MCF 10A (cell line): ENCODE measurements at regions of chr7 and their contacts with region 1.

Region 1: GRCh38 chr7:15720849-15721471 is 34.5 kb upstream of the MEOX2 start:
- DNase-seq: peak; percentile 53
- H3K4me3 Mint-ChIP-seq: no peak overlapping the region
- H3K27ac Mint-ChIP-seq: no peak overlapping the region
- H3K4me1 Mint-ChIP-seq: no peaks in the 10 kb centered on the region
- H3K27me3 Mint-ChIP-seq: peaks cover 70% of the 10 kb centered on the region
- CTCF ChIP-seq: peak; percentile 70

Region 2: DNA sequence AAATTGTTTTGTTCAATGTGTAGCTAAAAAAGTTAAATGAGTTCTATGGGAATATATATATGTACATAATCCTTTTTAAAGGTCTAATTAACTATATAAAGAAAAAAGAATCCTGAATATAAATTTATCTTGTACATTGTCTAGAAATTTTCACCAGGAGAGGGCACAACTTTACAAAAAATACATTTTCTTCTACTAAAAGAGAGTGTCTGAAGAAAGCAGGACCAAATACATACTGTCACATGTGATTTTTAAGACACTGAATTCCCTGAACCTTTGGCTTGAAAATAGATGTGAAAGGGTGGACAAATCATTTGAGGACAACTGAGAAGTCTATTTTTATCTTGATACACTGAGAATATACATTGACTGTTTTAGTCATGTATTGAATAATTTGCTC is 1022.7 kb before region 1 on chr7:
- CTCF ChIA-PET with region 1: no interaction called
- POLR2A ChIA-PET with region 1: no interaction called
- intact Hi-C with region 1: loop called (anchors 2 kb)
- DNase-seq: no peak
- H3K4me3 Mint-ChIP-seq: no peak overlapping the region
- H3K27ac Mint-ChIP-seq: no peak overlapping the region
- H3K4me1 Mint-ChIP-seq: no peaks in the 10 kb centered on the region
- H3K27me3 Mint-ChIP-seq: peaks cover 47% of the 10 kb centered on the region
- CTCF ChIP-seq: peak; percentile 13

Region 3: DNA sequence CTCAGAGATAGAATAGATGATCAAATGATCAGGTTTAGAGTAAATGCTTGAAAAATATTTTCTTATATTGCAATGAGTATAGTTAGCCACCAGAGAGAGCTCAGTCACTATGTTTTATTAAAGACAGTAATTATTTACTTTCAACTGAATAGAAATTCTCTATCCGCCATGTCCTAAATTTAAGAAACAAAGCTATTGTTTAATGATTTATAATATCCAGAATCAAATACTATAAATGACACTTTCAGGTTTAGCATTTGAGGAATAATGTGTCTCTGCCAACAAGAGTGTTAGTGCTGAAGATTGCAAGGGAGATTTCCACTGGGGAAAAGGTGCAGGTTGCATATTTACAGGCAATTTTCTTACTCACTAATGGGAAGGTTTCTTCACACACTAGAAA is 1003.1 kb before region 1 on chr7:
- CTCF ChIA-PET with region 1: interaction called, 4 read pairs
- POLR2A ChIA-PET with region 1: no interaction called
- intact Hi-C with region 1: loop called (anchors 2 kb)
- DNase-seq: peak; percentile 17
- H3K4me3 Mint-ChIP-seq: no peak overlapping the region
- H3K27ac Mint-ChIP-seq: no peak overlapping the region
- H3K4me1 Mint-ChIP-seq: no peaks in the 10 kb centered on the region
- H3K27me3 Mint-ChIP-seq: peaks cover 63% of the 10 kb centered on the region
- CTCF ChIP-seq: peak; percentile 59

Region 4: GRCh38 chr7:15305002-15305600 is 415.9 kb before region 1 on chr7:
- CTCF ChIA-PET with region 1: interaction called, 12 read pairs
- POLR2A ChIA-PET with region 1: no interaction called
- intact Hi-C with region 1: loop called (anchors 1 kb)
- DNase-seq: peak; percentile 71
- H3K4me3 Mint-ChIP-seq: no peak overlapping the region
- H3K27ac Mint-ChIP-seq: no peak overlapping the region
- H3K4me1 Mint-ChIP-seq: no peaks in the 10 kb centered on the region
- H3K27me3 Mint-ChIP-seq: peaks cover 23% of the 10 kb centered on the region
- CTCF ChIP-seq: peak; percentile 63

Region 5: GRCh38 chr7:15326044-15326644 is 394.8 kb before region 1 on chr7:
- CTCF ChIA-PET with region 1: interaction called, 21 read pairs
- POLR2A ChIA-PET with region 1: no interaction called
- intact Hi-C with region 1: loop called (anchors 1 kb)
- DNase-seq: peak; percentile 24
- H3K4me3 Mint-ChIP-seq: no peak overlapping the region
- H3K27ac Mint-ChIP-seq: no peak overlapping the region
- H3K4me1 Mint-ChIP-seq: no peaks in the 10 kb centered on the region
- H3K27me3 Mint-ChIP-seq: peaks cover 60% of the 10 kb centered on the region
- CTCF ChIP-seq: peak; percentile 39

Region 6: DNA sequence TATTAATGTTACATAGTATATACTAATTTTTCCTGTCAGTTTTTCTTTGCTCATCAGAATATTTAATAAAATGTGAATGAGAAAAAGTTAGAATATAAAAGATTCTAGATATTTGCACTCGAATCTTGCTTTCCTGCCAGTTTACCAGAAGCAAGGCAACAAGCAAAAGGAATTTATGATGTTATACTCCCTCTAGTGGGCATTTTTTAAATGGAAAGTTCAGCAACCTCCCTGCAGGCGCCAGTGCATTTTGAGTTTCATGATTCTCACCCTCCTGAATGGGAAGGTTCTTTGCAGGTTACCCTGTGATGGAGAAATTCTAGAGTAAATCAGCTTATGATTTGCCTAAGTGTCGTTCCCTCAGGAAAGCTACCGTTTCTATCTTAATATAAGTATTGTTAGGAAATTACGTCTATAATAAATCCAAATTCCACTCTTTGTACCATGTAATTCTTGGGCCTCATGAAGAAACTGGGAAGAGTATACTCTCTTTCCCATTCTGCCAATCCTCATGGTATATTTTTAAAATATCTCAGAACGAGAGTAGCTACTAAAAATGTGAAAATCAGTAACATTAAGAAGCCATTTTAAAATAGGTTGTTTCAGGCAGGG is 350.4 kb after region 1 on chr7:
- CTCF ChIA-PET with region 1: no interaction called
- POLR2A ChIA-PET with region 1: no interaction called
- intact Hi-C with region 1: loop called (anchors 5 kb)
- DNase-seq: peak; percentile 61
- H3K4me3 Mint-ChIP-seq: no peak overlapping the region
- H3K27ac Mint-ChIP-seq: no peak overlapping the region
- H3K4me1 Mint-ChIP-seq: peaks cover 4% of the 10 kb centered on the region
- H3K27me3 Mint-ChIP-seq: peaks cover 42% of the 10 kb centered on the region
- CTCF ChIP-seq: peak; percentile 71